B cell (primary cell): ENCODE measurements at regions of chr6 and their contacts with region 1.

Region 1: DNA sequence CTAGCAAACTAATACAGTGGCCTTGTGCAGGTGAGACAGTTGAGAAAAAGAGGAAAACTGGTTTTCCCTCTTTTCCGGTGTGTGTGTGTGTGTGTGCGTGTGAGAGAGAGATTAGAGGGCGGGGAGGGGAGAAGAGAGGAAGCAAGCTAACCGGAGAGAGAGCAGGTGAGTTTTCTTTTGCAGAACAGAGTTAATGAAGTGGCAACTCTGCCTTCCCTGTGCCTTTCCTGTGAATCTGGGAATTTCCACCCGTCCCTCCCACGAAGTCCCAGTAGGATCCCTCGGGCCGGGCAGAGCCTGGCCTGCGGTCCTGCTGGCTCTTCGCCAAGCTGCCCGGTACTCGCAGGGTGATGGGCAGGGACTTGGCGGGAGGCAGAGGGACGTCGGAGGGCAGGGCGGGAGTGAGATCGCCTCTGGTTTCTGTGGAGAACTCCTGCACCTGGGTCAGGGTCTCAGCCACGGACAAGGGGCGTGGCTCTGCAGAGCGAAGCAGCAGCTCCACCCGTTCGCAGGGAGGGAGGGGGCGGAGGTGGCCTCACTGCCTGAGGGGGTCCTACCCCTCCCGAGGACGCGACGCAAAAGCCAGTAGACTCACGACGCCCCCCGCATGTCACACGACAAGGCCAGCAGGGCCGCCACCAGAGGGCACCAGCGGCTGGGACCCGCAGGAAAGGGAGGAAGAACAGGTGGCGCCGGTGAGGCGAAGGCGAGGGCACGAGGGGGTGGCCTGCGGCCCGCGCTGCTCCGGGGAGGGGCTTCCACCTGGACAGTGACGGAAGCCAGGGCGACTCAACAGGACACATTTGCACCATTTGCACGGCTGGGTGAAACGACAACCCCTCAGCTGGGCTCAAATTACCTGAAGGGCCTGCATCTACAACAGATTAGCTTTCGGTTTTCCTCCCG is 51.2 kb upstream of the RNF182 start:
- DNase-seq: peak; percentile 83
- ATAC-seq: peak; percentile 94
- H3K4me3 ChIP-seq: peak overlapping the region; percentile 23 to 66 (median 55)
- H3K4me3 Mint-ChIP-seq: peak overlapping the region; percentile 89
- H3K27ac ChIP-seq: no peak overlapping the region
- H3K27ac Mint-ChIP-seq: peak overlapping the region; percentile 15
- H3K4me1 ChIP-seq: peaks cover 15 to 20% of the 10 kb centered on the region in 2 donors
- H3K4me1 Mint-ChIP-seq: peaks cover 19% of the 10 kb centered on the region
- H3K27me3 ChIP-seq: peaks cover 0 to 4% (median 0%) of the 10 kb centered on the region in 4 experiments
- H3K27me3 Mint-ChIP-seq: no peaks in the 10 kb centered on the region
- CTCF ChIP-seq: peak; percentile 87

Region 2: DNA sequence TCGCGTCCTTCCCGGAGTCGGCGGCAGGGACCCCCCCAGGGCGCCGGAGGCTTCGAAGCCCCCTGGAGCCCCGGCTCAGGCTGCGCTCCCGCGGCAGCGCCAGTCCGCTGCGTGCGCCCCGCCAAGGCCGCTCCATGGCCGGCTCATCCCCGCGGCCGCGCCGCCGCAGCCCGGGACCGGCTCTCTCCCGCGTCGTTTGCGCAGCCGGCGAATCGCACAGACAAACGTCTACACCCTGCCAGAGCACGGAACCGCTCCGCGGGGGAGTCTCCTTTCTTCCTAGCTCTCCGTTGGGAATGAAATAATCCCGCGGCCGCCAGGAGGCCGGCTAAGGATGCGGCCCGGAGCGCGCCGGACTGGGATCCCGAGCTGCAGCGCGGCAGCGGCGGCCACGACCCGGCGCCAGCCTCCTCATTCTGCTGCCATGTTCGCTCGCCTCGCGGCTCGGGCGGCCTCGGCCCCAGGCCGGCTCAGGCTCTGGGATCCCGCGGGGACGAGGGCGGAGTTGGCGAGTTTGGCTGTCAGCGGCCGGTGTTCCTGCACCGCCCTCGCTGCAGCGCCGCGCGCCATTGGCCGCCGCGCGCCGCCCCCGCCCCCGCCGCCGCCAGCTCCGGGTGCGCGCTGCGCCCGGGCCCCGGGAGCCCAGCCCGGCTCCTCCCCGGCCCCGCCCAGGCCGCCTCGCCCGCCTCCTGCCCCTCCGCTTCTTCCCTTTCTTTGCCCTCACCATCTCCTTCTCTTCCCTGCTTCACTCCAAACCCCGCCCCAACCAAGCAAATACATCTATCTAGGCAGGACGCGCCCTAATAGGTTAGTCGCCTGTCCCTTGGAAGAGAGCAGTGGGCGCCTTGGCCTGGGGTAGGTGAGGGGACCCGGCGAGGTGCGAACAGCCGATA is 386.2 kb before region 1 on chr6 and contains the start of gene GFOD1:
- CTCF ChIA-PET with region 1: no interaction called
- POLR2A ChIA-PET with region 1: no interaction called
- intact Hi-C with region 1: no loop called
- DNase-seq: peak; percentile 89
- ATAC-seq: peak; percentile 81
- H3K4me3 ChIP-seq: peak within 1 kb of the TSS; percentile 51 to 73 (median 66)
- H3K4me3 Mint-ChIP-seq: peak within 1 kb of the TSS; percentile 95
- H3K27ac ChIP-seq: peak within 1 kb of the TSS; percentile 57 to 60
- H3K27ac Mint-ChIP-seq: peak within 1 kb of the TSS; percentile 97
- H3K4me1 ChIP-seq: peaks cover 19 to 38% of the 10 kb centered on the region in 2 donors
- H3K4me1 Mint-ChIP-seq: peaks cover 42% of the 10 kb centered on the region
- H3K27me3 ChIP-seq: no peaks in the 10 kb centered on the region
- H3K27me3 Mint-ChIP-seq: no peaks in the 10 kb centered on the region
- CTCF ChIP-seq: no peak
- total RNA-seq, gene GFOD1: 42.4 and 44.6 TPM in 2 replicates

Region 3: GRCh38 chr6:13653296-13653695 is 220.2 kb before region 1 on chr6:
- CTCF ChIA-PET with region 1: no interaction called
- POLR2A ChIA-PET with region 1: no interaction called
- intact Hi-C with region 1: no loop called
- DNase-seq: no peak
- ATAC-seq: no peak
- H3K4me3 ChIP-seq: no peak overlapping the region
- H3K4me3 Mint-ChIP-seq: no peak overlapping the region
- H3K27ac ChIP-seq: no peak overlapping the region
- H3K27ac Mint-ChIP-seq: no peak overlapping the region
- H3K4me1 ChIP-seq: no peaks in the 10 kb centered on the region
- H3K4me1 Mint-ChIP-seq: peaks cover 6% of the 10 kb centered on the region
- H3K27me3 ChIP-seq: no peaks in the 10 kb centered on the region
- H3K27me3 Mint-ChIP-seq: no peaks in the 10 kb centered on the region
- CTCF ChIP-seq: no peak

Region 4: GRCh38 chr6:13681305-13682061 is 192.1 kb before region 1 on chr6:
- CTCF ChIA-PET with region 1: no interaction called
- POLR2A ChIA-PET with region 1: interaction called, 13 read pairs
- intact Hi-C with region 1: no loop called
- DNase-seq: peak; percentile 29
- ATAC-seq: no peak
- H3K4me3 ChIP-seq: no peak overlapping the region
- H3K4me3 Mint-ChIP-seq: no peak overlapping the region
- H3K27ac ChIP-seq: peak overlapping the region in 1 of 2 donors; percentile 42
- H3K27ac Mint-ChIP-seq: no peak overlapping the region
- H3K4me1 ChIP-seq: peaks cover 6 to 9% of the 10 kb centered on the region in 2 donors
- H3K4me1 Mint-ChIP-seq: peaks cover 36% of the 10 kb centered on the region
- H3K27me3 ChIP-seq: no peaks in the 10 kb centered on the region
- H3K27me3 Mint-ChIP-seq: no peaks in the 10 kb centered on the region
- CTCF ChIP-seq: no peak

Region 5: DNA sequence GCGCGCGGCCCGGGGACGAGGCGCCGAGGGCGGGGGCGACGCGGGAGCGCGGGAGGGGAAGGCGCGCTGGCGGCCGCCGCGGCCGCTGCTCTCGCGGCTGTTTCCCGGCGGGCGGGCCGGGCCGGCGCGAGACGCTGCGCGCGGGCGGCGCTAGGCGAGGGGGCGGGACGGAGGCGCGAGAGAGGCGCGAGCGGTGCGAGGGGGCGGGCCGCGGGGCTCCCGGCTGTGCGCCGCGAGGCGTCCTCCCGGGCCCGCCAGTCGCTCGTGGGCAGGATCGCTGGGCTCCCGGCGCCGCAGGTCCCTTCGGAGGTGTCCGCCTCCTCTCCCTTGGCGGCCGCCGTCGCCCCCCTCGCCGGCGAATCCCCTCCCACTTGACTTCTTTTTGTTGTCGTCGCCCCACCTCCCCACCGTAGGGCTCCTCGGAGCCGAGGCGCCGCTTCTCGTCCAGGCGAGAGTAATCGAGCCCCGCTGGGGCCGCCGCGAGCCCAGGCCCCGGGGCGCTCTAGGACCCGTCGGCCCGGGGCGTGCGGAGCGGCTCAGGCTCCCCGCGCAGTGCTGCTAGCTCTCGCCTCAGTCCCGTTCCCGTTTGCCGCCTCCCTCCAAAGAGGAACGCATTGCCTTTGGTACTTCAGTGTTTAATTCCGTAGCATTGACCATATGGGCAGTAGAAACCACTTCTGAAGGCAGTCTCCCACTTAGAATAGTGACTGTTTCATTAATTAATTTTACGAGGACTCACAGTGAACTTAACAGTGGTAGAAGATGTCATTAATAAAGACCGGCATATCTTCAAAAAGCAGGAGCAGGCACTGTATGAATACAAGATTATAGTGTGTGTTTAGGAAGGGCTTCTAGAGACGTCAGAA is 161.6 kb before region 1 on chr6 and contains the start of gene RANBP9:
- CTCF ChIA-PET with region 1: interaction called, 3 read pairs
- POLR2A ChIA-PET with region 1: no interaction called
- intact Hi-C with region 1: loop called (anchors 1 kb)
- DNase-seq: peak; percentile 94
- ATAC-seq: peak; percentile 82
- H3K4me3 ChIP-seq: peak within 1 kb of the TSS; percentile 58 to 88 (median 78)
- H3K4me3 Mint-ChIP-seq: peak within 1 kb of the TSS; percentile 96
- H3K27ac ChIP-seq: peak within 1 kb of the TSS; percentile 80 to 84
- H3K27ac Mint-ChIP-seq: peak within 1 kb of the TSS; percentile 96
- H3K4me1 ChIP-seq: peaks cover 29 to 33% of the 10 kb centered on the region in 2 donors
- H3K4me1 Mint-ChIP-seq: peaks cover 41% of the 10 kb centered on the region
- H3K27me3 ChIP-seq: no peaks in the 10 kb centered on the region
- H3K27me3 Mint-ChIP-seq: no peaks in the 10 kb centered on the region
- CTCF ChIP-seq: no peak
- total RNA-seq, gene RANBP9: 34.1 and 39.0 TPM in 2 replicates

Region 6: DNA sequence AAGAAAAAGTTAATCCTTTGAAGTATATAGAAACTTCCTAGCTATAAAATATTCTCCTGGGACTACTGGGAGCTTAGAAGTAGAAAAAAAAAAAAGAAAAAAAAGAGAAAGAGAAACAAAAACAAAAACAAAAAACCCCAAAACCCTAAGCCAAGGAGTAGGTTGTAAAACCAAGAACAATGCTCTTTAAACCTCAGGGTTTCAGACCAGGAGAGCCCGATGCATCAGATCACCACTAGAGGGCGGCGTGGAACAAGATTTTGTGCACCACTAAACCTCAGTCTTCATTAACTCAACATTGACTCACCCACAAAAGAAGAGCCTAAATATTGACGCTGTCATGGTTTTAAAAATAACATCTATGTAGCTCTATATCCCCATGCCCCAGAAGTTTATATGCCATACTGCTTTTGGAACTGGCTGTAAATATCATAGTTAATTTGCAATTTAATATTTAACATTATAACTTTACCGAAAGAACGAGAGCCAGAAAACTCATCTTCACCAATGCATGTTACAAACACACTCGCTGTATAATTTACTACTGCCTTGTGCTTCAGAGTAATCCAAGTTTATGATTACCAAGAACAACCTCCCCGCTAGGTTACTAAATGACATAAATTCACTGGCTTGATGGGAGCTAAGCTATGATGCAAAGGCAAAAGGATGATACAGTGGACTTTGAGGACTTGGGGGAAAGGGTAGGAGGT is 78.3 kb before region 1 on chr6:
- CTCF ChIA-PET with region 1: interaction called, 8 read pairs
- POLR2A ChIA-PET with region 1: no interaction called
- intact Hi-C with region 1: loop called (anchors 5 kb)
- DNase-seq: peak; percentile 81
- ATAC-seq: peak; percentile 91
- H3K4me3 ChIP-seq: no peak overlapping the region
- H3K4me3 Mint-ChIP-seq: no peak overlapping the region
- H3K27ac ChIP-seq: no peak overlapping the region
- H3K27ac Mint-ChIP-seq: no peak overlapping the region
- H3K4me1 ChIP-seq: no peaks in the 10 kb centered on the region
- H3K4me1 Mint-ChIP-seq: peaks cover 2% of the 10 kb centered on the region
- H3K27me3 ChIP-seq: no peaks in the 10 kb centered on the region
- H3K27me3 Mint-ChIP-seq: no peaks in the 10 kb centered on the region
- CTCF ChIP-seq: peak; percentile 93

Region 7: GRCh38 chr6:13916230-13916944 is 42.8 kb after region 1 on chr6:
- CTCF ChIA-PET with region 1: no interaction called
- POLR2A ChIA-PET with region 1: no interaction called
- intact Hi-C with region 1: no loop called
- DNase-seq: peak; percentile 16
- ATAC-seq: no peak
- H3K4me3 ChIP-seq: no peak overlapping the region
- H3K4me3 Mint-ChIP-seq: no peak overlapping the region
- H3K27ac ChIP-seq: no peak overlapping the region
- H3K27ac Mint-ChIP-seq: no peak overlapping the region
- H3K4me1 ChIP-seq: no peaks in the 10 kb centered on the region
- H3K4me1 Mint-ChIP-seq: peaks cover 3% of the 10 kb centered on the region
- H3K27me3 ChIP-seq: peaks cover 0 to 9% (median 2%) of the 10 kb centered on the region in 4 experiments
- H3K27me3 Mint-ChIP-seq: peaks cover 19% of the 10 kb centered on the region
- CTCF ChIP-seq: no peak